Endothelial cell of umbilical vein (primary cell): ENCODE measurements at regions of chr21 and their contacts with region 1.

Region 1: DNA sequence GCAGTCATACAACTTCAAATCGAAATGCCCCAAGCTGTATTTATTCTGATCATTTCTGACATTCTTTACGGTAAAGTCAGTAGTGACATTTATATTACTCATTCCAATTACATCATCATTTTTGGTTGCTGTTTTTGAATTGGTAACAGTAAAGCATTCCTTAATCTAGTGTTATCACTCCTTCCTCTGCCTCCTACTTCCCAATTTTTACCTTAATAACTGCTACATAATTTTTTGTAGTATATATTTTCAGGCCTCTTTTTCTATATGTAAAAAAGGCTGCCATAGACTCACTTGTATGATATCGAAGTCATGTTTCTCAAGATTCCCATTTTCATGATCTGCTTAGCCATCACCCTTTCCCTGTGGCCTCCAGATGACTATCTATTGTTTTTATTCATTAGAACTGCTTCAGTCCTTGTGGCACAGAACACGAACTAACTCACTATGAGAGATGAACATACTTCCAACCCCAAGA is 167.2 kb downstream of the RUNX1 start:
- DNase-seq: peak; percentile 83
- H3K4me3 ChIP-seq: peak overlapping the region in 2 of 3 experiments; percentile 22 to 42
- H3K27ac ChIP-seq: peak overlapping the region; percentile 98
- H3K4me1 ChIP-seq: peaks cover 47% of the 10 kb centered on the region
- H3K27me3 ChIP-seq: no peaks in the 10 kb centered on the region
- CTCF ChIP-seq: no peak
- POLR2A ChIP-seq: peak; percentile 51

Region 2: DNA sequence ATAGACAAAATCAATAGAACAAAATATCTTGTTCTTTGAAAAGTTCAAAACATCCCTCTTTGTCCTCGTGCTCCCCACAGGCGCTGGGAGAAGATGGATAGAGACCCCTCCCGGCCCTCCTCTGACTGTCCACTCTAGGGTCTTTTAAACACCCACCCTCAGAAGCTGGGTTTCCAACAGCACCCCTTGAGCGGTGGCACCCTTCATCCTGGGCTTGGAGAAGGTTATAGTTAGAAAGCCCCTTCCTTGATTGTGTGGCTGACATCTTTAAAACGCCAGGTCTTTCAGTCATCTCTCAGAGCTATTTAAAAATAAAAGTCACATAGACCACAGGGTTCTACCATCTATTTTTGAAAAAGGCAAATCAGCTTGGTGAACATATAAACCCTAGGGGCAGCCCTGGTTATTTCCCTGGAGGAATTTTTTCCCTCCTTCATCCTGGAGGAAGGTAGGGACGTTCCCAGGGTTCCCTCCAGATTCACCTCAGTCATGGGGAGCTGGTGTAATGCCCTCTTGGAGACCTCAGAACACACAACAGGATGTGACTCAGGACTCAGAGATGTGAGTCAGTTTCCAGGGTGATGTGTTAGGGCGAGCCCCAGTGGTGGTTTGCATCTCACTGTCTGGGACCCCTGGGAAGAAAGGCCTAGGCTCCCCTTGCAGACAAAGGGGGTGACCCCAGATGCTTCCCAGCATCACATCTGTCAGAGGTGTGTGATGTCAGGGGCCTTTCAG is 74.6 kb before region 1 on chr21:
- CTCF ChIA-PET with region 1: interaction called, 6 read pairs
- POLR2A ChIA-PET with region 1: interaction called, 6 read pairs
- dilution Hi-C with region 1: no loop called
- intact Hi-C with region 1: loop called (anchors 1 kb)
- DNase-seq: peak; percentile 94
- H3K4me3 ChIP-seq: no peak overlapping the region
- H3K27ac ChIP-seq: peak overlapping the region; percentile 100
- H3K4me1 ChIP-seq: peaks cover 37% of the 10 kb centered on the region
- H3K27me3 ChIP-seq: no peaks in the 10 kb centered on the region
- CTCF ChIP-seq: no peak
- POLR2A ChIP-seq: no peak

Region 3: DNA sequence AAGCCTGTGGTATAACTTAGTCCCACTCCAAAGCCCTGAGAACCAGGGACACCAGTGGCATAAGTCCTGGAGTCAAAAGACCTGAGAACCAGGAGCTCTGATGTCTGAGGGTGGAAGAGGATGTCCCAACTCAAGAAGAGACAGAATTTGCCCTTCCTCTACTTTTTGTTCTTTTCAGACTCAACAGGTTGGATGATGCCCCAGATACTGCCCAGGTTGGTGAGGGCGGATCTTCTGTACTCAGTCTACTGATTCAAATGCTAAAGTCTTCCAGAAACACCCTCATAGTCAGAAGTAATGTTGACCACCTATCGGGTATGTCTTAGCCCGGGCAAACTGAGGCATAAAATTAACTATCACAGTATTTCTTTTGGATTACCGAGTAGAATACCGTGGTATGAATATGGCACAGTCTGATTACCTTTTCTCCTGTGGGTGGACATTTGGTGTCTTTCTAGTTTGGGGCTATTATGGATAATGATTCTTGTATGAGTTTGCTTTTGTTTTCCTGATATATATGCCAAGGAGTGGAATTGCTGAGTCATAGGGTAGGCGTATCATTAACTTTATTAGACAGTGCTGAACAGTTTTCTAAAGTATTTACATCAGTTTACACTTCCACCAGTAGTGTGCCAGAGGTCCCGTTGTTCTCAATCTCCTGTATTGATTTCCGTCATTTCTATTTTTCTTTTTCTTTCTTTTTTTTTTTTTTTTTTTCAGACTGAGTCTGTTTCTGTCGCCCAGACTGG is 1500.1 kb after region 1 on chr21:
- CTCF ChIA-PET with region 1: no interaction called
- POLR2A ChIA-PET with region 1: interaction called, 11 read pairs
- dilution Hi-C with region 1: no loop called
- intact Hi-C with region 1: no loop called
- DNase-seq: peak; percentile 14
- H3K4me3 ChIP-seq: no peak overlapping the region
- H3K27ac ChIP-seq: no peak overlapping the region
- H3K4me1 ChIP-seq: peaks cover 7% of the 10 kb centered on the region
- H3K27me3 ChIP-seq: no peaks in the 10 kb centered on the region
- CTCF ChIP-seq: no peak
- POLR2A ChIP-seq: no peak